PC-9 (cell line): ENCODE measurements at regions of chr4 and their contacts with region 1.

Region 1: DNA sequence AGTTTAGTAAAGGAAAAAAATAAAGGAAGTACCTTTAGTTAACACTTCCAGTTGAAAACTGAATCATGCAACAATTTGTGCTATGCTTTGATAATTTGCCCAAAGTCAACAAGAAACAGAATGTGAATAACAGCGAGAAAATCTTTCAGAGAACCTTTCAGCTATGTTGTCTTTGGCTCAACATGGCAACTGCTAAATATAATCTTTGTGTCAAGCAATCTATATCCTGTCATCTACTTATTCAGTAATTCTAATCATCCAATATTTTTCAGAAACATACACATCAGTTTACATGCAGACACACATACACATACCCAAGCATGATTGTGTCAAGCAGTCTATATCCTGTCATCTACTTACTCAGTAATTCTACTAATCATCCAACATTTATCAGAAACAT is 136.0 kb upstream of the PABPC4L start:
- DNase-seq: no peak
- H3K4me3 ChIP-seq: no peak overlapping the region
- H3K27ac ChIP-seq: no peak overlapping the region
- H3K4me1 ChIP-seq: no peaks in the 10 kb centered on the region
- H3K27me3 ChIP-seq: no peaks in the 10 kb centered on the region
- CTCF ChIP-seq: no peak

Region 2: DNA sequence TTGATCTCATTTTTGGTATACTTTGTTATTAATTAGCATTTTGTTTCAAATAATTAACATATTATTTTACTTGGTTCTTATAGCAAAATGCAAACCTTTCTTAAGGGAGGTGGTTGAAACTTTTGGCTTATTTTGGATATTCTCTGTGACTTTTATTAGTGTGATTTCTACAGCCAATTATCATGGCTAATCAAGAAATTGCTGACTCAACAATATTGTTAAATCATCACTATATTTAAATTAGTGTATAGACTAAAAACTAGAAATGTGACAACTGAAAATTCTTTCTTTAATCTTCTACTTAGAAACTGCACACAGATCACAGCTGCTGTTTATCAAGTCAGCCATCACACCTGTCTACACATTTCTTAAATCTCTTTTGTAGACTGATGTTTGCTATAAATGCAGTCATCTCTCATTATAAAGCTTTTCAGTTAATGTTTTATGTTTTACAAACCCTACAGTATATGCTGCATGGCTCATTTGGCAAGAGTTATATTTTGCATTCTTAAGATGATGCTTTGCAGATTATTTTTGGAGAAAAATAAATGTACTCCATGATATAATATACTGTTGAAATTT is 1578.3 kb before region 1 on chr4:
- CTCF ChIA-PET with region 1: no interaction called
- POLR2A ChIA-PET with region 1: interaction called, 18 read pairs
- intact Hi-C with region 1: no loop called
- DNase-seq: no peak
- H3K4me3 ChIP-seq: no peak overlapping the region
- H3K27ac ChIP-seq: no peak overlapping the region
- H3K4me1 ChIP-seq: no peaks in the 10 kb centered on the region
- H3K27me3 ChIP-seq: no peaks in the 10 kb centered on the region
- CTCF ChIP-seq: no peak

Region 3: DNA sequence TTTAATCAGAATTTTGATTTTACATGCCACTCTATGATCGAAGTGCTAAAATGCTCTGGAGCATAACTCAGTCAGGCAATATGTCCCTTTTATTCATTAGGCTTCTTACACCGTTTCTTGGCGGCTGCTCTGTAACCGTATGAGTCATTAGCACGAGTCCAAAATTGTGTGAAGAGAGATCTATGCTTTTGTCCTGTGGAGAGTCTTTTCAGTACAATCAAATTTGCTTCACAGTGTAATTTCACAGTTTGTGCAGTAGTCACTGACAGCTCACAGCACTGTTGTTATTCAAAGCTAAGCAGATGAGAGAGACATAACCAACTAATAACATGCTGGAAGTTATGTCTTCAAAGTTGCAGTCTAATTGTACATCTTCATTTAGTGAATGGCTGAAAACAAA is 1020.7 kb before region 1 on chr4:
- CTCF ChIA-PET with region 1: no interaction called
- POLR2A ChIA-PET with region 1: no interaction called
- intact Hi-C with region 1: no loop called
- DNase-seq: no peak
- H3K4me3 ChIP-seq: no peak overlapping the region
- H3K27ac ChIP-seq: no peak overlapping the region
- H3K4me1 ChIP-seq: no peaks in the 10 kb centered on the region
- H3K27me3 ChIP-seq: no peaks in the 10 kb centered on the region
- CTCF ChIP-seq: no peak